Endothelial cell of umbilical vein (primary cell): ENCODE measurements at regions of chr5 and their contacts with region 1.

Region 1: DNA sequence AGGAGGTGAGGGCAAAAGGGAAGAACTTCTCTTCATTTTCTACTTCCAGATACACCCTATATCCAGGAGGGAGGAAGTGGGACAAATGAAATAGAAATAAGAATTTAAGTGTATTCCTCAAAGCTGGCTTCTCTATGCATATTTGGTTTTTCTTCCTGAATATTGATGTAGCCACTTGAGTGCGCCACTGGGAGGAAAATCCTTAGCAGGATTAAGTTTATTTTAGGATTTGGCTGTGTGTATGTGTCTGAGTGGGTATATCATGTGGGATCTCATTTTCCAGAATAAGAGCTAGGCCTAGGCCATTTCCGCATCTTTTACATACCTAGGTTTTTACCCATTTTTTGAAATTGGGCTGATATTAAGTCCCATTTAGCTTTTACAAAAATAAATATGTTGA is 42.5 kb downstream of the MAP1B start:
- DNase-seq: no peak
- H3K4me3 ChIP-seq: no peak overlapping the region
- H3K27ac ChIP-seq: no peak overlapping the region
- H3K4me1 ChIP-seq: peaks cover 32% of the 10 kb centered on the region
- H3K27me3 ChIP-seq: no peaks in the 10 kb centered on the region
- CTCF ChIP-seq: no peak
- POLR2A ChIP-seq: no peak

Region 2: GRCh38 chr5:72138943-72139521 is 10.7 kb before region 1 on chr5:
- CTCF ChIA-PET with region 1: interaction called, 5 read pairs
- POLR2A ChIA-PET with region 1: no interaction called
- dilution Hi-C with region 1: no loop called
- intact Hi-C with region 1: loop called (anchors 2 kb)
- DNase-seq: no peak
- H3K4me3 ChIP-seq: no peak overlapping the region
- H3K27ac ChIP-seq: peak overlapping the region; percentile 24
- H3K4me1 ChIP-seq: peaks cover 73% of the 10 kb centered on the region
- H3K27me3 ChIP-seq: no peaks in the 10 kb centered on the region
- CTCF ChIP-seq: no peak
- POLR2A ChIP-seq: no peak

Region 3: DNA sequence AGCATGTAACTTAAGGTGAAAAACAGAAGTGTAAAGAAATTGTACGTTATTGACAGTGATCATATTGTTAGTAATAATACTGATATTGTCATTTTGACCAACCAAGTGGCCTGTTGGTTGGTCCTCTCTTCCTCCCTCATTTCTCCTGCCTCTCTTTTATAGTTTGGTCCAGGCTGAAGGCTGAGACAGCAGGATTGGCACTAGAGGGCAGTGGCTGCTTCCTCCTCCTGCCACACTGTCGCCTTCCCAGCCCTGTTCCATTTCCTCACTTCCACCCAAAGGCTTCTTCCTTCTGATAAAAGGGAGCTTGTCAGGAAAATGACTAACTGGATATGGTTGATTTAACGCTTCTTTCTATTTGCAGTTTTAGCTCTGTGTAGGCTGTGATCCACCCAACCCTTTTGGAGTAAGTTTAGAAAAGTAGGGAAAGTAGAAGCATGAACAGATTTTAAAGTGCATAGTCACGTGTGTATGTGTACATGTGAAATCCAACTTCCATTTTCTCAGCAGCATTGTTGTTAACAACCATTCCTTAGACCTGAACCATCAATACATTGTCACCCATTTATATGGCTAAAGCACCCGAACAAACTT is 206.1 kb after region 1 on chr5:
- CTCF ChIA-PET with region 1: no interaction called
- POLR2A ChIA-PET with region 1: no interaction called
- dilution Hi-C with region 1: no loop called
- intact Hi-C with region 1: no loop called
- DNase-seq: peak; percentile 69
- H3K4me3 ChIP-seq: no peak overlapping the region
- H3K27ac ChIP-seq: no peak overlapping the region
- H3K4me1 ChIP-seq: peaks cover 7% of the 10 kb centered on the region
- H3K27me3 ChIP-seq: no peaks in the 10 kb centered on the region
- CTCF ChIP-seq: peak; percentile 54 to 57
- POLR2A ChIP-seq: no peak